ENCODE measurements at regions of chr9 and their contacts with region 1.

Region 1: DNA sequence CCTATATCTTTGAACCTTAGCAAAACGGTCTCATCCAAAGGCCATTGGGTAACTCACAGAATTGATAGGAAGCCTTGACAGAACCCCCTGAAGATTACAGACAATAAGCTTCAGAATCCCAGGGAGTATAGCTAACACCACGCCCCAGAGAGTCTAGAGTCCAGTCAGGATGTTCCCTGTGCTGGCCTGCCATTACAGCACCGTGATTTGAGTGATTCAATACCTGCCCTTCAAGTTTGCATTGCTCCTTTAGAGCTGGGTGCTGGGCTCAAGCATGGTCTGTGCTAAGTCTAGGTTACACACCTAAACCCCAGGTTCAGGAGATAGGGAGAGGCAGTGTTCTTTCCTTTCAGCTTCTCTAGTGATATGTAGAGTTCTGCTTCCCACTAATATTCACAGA is 90.5 kb downstream of the RASEF start:
- DNase-seq: no peak

Region 2: GRCh38 chr9:82332018-82332773 is 640.2 kb before region 1 on chr9:
- intact Hi-C with region 1: loop called in 1 of 2 experiments (anchors 5 kb)
- DNase-seq: no peak

Measured in posterior vena cava (tissue), 2 donors.